ENCODE measurements at regions of chr1 and their contacts with region 1.

Region 1: GRCh38 chr1:248858891-248859889 is at the start of gene ZNF692:
- DNase-seq: peak; percentile 97
- H3K4me3 ChIP-seq: peak within 1 kb of the TSS; percentile 45 to 46
- H3K27ac ChIP-seq: peak within 1 kb of the TSS; percentile 86 to 93
- H3K4me1 ChIP-seq: peaks cover 6% of the 10 kb centered on the region
- H3K27me3 ChIP-seq: no peaks in the 10 kb centered on the region
- CTCF ChIP-seq: peak in 1 of 4 experiments; percentile 17
- POLR2A ChIP-seq: peak; percentile 88
- total RNA-seq, gene ZNF692: 65.0 to 99.7 TPM

Region 2: DNA sequence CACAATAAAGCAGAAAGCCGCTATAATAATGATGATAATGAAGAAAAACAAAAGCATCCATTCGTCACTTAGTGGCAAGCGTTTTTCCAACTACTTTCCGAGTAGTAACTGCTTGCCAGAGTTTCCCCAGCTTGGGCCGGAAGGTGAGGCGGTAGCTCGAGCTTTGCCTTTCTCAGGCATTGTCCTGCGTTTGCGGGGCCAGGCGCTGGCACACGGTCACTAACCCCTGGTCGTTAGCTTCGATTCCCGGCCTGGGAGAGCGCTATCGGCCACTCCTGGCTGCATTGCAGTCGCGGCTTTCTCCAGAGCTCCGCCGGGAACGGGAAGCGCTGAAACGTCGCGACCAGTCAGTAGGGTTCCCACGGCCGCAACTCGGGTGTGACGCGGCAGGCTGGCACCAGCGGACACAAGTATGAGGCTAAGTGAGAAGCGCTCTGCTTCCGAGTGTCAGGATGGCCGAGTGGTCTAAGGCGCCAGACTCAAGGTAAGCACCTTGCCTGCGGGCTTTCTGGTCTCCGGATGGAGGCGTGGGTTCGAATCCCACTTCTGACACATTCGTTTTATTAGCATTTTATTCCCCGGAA is 14.3 kb after region 1 on chr1:
- intact Hi-C with region 1: loop called (anchors 2 kb)
- DNase-seq: peak; percentile 91
- H3K4me3 ChIP-seq: peak overlapping the region; percentile 51 to 58
- H3K27ac ChIP-seq: peak overlapping the region; percentile 95 to 96
- H3K4me1 ChIP-seq: no peaks in the 10 kb centered on the region
- H3K27me3 ChIP-seq: no peaks in the 10 kb centered on the region
- CTCF ChIP-seq: peak in 1 of 4 experiments; percentile 10
- POLR2A ChIP-seq: peak; percentile 37

Measured in prostate gland (tissue), 2 donors.